Naive thymus-derived CD4-positive, alpha-beta T cell (primary cell): ENCODE measurements at regions of chr1 and their contacts with region 1.

Region 1: DNA sequence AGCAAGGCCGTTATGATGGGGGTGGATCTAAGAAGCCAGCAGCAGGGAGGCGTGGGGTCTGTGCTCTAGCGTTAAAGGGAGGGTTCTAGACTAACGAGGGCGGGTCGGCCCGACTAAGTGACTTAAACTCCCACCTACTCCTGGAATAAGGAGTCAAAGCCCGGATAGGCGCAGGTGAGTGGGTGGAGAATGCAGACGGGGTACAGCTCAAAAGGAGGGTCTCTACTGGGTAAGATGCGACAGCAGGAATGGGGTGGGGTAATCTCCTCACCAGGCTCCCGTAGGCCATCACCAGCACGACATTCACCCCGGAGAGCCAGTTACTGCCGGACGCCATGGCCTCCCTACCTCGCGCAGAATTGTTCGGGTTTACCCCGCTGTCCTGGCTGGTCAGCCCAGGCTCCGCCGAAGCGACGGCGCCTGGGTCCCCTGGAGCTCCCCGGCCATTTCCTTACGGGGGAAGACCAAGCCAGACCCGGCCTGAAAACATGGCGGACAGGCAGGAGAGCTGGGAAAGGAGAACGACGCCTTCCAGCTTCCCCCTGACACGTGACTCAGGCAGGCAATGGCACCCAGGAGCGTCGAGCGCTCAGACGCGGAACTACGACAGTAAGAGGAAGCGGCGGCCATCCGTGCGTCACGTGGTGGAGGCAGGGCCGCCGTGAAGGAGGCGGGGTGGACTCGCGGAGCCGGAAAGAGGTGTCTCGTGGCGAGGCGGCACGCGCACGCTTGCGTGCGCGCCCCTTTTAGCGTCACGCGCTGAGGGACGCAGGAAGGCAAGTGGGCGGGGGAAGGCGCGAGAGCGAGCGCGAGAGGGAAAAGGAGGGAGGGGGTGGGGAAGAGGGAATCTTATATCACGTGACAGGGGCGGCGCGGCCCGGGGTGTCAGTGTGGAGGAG is at the start of gene UBAP2L:
- DNase-seq: peak; percentile 92 to 99 (median 99)
- ATAC-seq: peak; percentile 91
- H3K4me3 ChIP-seq: peak within 1 kb of the TSS; percentile 95
- H3K4me3 Mint-ChIP-seq: peak within 1 kb of the TSS; percentile 83 to 100 (median 98)
- H3K27ac ChIP-seq: peak within 1 kb of the TSS; percentile 99
- H3K27ac Mint-ChIP-seq: peak within 1 kb of the TSS; percentile 96 to 100 (median 99)
- H3K4me1 ChIP-seq: peaks cover 42 to 45% of the 10 kb centered on the region in 2 donors
- H3K4me1 Mint-ChIP-seq: peaks cover 46 to 76% (median 64%) of the 10 kb centered on the region in 7 donors
- H3K27me3 ChIP-seq: no peaks in the 10 kb centered on the region
- H3K27me3 Mint-ChIP-seq: peaks cover 0 to 4% (median 0%) of the 10 kb centered on the region in 5 donors
- total RNA-seq, gene UBAP2L: 183 to 235 (median 189) TPM

Region 2: GRCh38 chr1:153727463-153728304 is 492.6 kb before region 1 on chr1 and contains the start of gene INTS3:
- CTCF ChIA-PET with region 1: no interaction called
- POLR2A ChIA-PET with region 1: no interaction called
- intact Hi-C with region 1: loop called in 1 of 2 experiments (anchors 1 kb)
- DNase-seq: peak; percentile 84 to 100 (median 99)
- ATAC-seq: peak; percentile 99
- H3K4me3 ChIP-seq: peak within 1 kb of the TSS; percentile 92
- H3K4me3 Mint-ChIP-seq: peak within 1 kb of the TSS; percentile 82 to 97 (median 92)
- H3K27ac ChIP-seq: peak within 1 kb of the TSS; percentile 94
- H3K27ac Mint-ChIP-seq: peak within 1 kb of the TSS; percentile 89 to 98 (median 95)
- H3K4me1 ChIP-seq: peaks cover 11 to 15% of the 10 kb centered on the region in 2 donors
- H3K4me1 Mint-ChIP-seq: peaks cover 7 to 35% (median 32%) of the 10 kb centered on the region in 7 donors
- H3K27me3 ChIP-seq: no peaks in the 10 kb centered on the region
- H3K27me3 Mint-ChIP-seq: peaks cover 0 to 2% (median 0%) of the 10 kb centered on the region in 5 donors
- total RNA-seq, gene INTS3: 43.6 to 68.1 (median 56.8) TPM

Region 3: DNA sequence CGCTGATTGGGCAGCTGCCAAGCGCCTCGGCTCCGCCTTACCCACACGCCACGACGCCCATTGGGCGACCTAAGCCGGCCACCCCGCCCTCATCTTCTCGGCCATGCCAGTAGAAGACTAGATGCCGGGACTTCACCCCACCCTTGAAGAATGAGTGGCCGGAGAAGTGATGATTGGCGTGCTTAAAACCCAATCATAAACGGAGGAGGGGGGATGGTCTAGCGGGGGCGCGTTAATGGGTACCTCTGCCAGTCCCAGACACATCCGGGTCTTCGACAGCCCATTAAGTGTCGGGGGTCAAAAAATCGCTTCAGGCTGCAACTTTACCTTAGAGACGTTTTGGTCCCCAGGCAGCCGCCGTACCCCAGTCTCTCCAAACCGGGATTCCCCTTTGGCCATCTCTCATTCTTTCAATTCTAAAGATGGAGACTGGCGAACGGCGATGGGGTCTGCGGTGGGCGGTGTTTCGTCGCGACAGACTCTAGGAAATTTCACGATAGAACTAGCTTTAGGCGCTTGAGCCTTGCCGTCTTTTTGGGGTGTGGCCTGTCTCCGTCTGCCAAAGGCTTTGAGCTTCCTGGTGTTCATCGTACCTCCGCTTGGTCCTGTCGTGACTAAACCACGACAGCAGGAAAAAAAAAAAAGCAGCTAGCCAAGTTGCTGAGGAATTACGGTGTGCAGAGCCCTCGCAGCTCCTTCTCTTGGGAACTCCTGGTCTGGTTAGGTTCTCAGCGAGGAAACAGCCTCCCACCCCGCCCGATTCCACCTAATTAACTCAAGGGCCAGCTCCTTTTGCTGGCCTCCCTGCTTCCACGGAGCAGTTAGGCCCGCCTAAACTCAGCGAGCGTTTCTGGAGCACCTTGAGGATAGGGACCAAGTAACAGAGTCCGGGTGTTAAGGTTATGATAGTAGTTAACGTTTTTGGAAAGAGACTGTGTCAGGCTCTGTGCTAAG is 297.1 kb before region 1 on chr1 and contains the start of gene GATAD2B:
- CTCF ChIA-PET with region 1: no interaction called
- POLR2A ChIA-PET with region 1: no interaction called
- intact Hi-C with region 1: loop called (anchors 1 kb)
- DNase-seq: peak; percentile 86 to 100 (median 99)
- ATAC-seq: peak; percentile 94
- H3K4me3 ChIP-seq: peak within 1 kb of the TSS; percentile 87
- H3K4me3 Mint-ChIP-seq: peak within 1 kb of the TSS; percentile 83 to 96 (median 94)
- H3K27ac ChIP-seq: peak within 1 kb of the TSS; percentile 97
- H3K27ac Mint-ChIP-seq: peak within 1 kb of the TSS; percentile 90 to 99 (median 97)
- H3K4me1 ChIP-seq: peaks cover 35% of the 10 kb centered on the region in 2 donors
- H3K4me1 Mint-ChIP-seq: peaks cover 31 to 53% (median 44%) of the 10 kb centered on the region in 7 donors
- H3K27me3 ChIP-seq: no peaks in the 10 kb centered on the region
- H3K27me3 Mint-ChIP-seq: peaks cover 0 to 3% (median 0%) of the 10 kb centered on the region in 5 donors
- total RNA-seq, gene GATAD2B: 67.3 to 102 (median 75.5) TPM

Region 4: DNA sequence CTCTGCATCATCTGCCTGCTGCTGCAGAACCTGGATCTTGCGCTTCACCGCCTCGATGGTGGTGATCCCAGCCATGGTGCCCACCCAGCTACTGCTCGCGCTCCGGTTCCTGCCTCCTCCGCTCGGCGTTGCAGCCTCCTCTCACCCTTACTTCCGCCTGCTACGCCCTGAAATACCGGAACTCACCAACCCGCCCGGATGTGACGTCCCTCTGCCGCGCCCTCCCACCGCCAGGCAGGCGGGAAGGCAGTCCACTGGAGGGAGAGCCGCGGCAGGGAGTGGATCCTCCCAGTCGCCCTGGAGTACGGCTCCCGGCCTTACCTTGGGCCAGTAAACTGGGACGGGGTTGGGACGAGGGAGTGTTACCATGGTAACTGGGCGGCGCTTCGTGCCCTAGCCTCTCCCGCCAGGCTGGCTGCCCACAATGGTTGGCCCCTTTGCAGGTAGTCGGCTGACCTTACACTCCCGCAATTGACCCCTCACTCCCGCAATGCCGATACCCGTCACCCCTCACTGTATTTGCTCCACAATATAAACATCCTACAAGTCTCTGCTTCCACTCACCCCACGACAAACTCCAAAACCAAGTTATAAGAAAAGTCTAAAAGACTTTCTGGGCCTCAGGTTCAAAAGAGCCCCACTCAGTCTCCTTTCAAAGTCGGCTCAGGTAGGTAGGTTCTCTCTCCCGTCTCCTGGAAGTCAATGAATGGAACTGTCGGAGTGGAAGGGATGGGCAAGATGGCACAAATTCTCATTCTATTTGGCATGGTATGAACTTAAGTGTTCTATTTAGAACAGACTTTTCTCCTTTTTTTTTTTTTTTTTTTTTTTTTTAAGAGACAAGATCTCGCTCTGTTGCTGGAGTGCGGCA is 37.0 kb before region 1 on chr1:
- CTCF ChIA-PET with region 1: interaction called, 3 read pairs
- POLR2A ChIA-PET with region 1: interaction called, 8 read pairs
- intact Hi-C with region 1: loop called (anchors 1 kb)
- DNase-seq: peak; percentile 84 to 94 (median 94)
- ATAC-seq: peak; percentile 89
- H3K4me3 ChIP-seq: peak overlapping the region; percentile 93
- H3K4me3 Mint-ChIP-seq: peak overlapping the region; percentile 98 to 100 (median 100)
- H3K27ac ChIP-seq: peak overlapping the region; percentile 95
- H3K27ac Mint-ChIP-seq: peak overlapping the region; percentile 98 to 100 (median 99)
- H3K4me1 ChIP-seq: peaks cover 25 to 44% of the 10 kb centered on the region in 2 donors
- H3K4me1 Mint-ChIP-seq: peaks cover 44 to 49% (median 48%) of the 10 kb centered on the region in 7 donors
- H3K27me3 ChIP-seq: no peaks in the 10 kb centered on the region
- H3K27me3 Mint-ChIP-seq: peaks cover 0 to 7% (median 0%) of the 10 kb centered on the region in 5 donors

Region 5: DNA sequence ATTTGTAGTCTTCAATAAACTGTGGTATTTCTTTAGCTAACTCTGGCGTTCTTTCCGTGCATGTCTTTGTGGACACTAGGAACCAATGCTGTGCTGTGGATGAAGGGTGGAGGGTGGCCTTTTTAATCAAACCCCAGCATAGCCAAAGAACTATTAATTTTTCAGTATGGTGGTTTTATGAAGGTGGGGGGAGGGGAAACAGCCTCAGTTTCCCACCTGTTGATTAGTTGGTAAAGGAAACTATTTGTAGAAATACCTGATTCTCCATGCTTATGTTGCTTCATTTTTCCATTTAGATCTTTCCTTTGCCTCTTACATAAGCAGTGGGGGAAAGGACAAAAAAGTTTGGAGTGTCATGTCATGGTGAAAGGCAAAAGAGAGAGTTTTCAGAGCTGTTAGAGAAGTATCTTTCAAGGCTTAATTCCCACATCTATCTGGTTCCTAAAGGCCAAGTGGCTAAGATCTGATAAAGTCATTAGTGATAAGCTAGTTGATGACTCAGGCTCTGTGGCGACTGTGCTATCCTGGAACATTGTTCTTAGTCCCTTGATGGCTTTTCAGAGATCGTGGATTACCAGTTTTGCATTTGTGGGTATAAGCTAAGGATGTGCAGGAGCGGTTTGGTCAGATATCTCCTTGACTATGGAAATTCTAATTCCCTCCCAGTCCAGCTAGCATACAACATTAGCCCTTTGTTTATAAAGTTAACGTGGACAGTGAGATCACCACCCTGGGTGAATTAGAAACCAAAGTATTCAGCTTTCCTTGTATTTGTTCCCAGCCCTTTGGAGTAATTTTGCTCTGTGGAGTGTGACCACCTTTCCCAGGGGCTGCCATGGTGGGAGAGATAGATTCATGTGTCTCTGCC is 43.4 kb after region 1 on chr1:
- CTCF ChIA-PET with region 1: interaction called, 3 read pairs
- POLR2A ChIA-PET with region 1: interaction called, 12 read pairs
- intact Hi-C with region 1: loop called (anchors 2 kb)
- DNase-seq: no peak
- ATAC-seq: no peak
- H3K4me3 ChIP-seq: no peak overlapping the region
- H3K4me3 Mint-ChIP-seq: peak overlapping the region in 2 of 10 donors; percentile 6 to 83
- H3K27ac ChIP-seq: peak overlapping the region; percentile 86
- H3K27ac Mint-ChIP-seq: peak overlapping the region; percentile 70 to 98 (median 89)
- H3K4me1 ChIP-seq: peaks cover 0 to 30% of the 10 kb centered on the region in 2 donors
- H3K4me1 Mint-ChIP-seq: peaks cover 22 to 52% (median 43%) of the 10 kb centered on the region in 7 donors
- H3K27me3 ChIP-seq: no peaks in the 10 kb centered on the region
- H3K27me3 Mint-ChIP-seq: no peaks in the 10 kb centered on the region

Region 6: GRCh38 chr1:154627257-154628120 is 407.2 kb after region 1 on chr1:
- CTCF ChIA-PET with region 1: no interaction called
- POLR2A ChIA-PET with region 1: no interaction called
- intact Hi-C with region 1: loop called in 1 of 2 experiments (anchors 5 kb)
- DNase-seq: peak; percentile 78 to 92 (median 90)
- ATAC-seq: peak; percentile 81
- H3K4me3 ChIP-seq: peak overlapping the region; percentile 72
- H3K4me3 Mint-ChIP-seq: peak overlapping the region; percentile 85 to 100 (median 94)
- H3K27ac ChIP-seq: peak overlapping the region; percentile 99
- H3K27ac Mint-ChIP-seq: peak overlapping the region; percentile 98 to 100 (median 99)
- H3K4me1 ChIP-seq: peaks cover 15% of the 10 kb centered on the region in 2 donors
- H3K4me1 Mint-ChIP-seq: peaks cover 20 to 54% (median 44%) of the 10 kb centered on the region in 7 donors
- H3K27me3 ChIP-seq: no peaks in the 10 kb centered on the region
- H3K27me3 Mint-ChIP-seq: peaks cover 0 to 20% (median 7%) of the 10 kb centered on the region in 5 donors

Region 7: DNA sequence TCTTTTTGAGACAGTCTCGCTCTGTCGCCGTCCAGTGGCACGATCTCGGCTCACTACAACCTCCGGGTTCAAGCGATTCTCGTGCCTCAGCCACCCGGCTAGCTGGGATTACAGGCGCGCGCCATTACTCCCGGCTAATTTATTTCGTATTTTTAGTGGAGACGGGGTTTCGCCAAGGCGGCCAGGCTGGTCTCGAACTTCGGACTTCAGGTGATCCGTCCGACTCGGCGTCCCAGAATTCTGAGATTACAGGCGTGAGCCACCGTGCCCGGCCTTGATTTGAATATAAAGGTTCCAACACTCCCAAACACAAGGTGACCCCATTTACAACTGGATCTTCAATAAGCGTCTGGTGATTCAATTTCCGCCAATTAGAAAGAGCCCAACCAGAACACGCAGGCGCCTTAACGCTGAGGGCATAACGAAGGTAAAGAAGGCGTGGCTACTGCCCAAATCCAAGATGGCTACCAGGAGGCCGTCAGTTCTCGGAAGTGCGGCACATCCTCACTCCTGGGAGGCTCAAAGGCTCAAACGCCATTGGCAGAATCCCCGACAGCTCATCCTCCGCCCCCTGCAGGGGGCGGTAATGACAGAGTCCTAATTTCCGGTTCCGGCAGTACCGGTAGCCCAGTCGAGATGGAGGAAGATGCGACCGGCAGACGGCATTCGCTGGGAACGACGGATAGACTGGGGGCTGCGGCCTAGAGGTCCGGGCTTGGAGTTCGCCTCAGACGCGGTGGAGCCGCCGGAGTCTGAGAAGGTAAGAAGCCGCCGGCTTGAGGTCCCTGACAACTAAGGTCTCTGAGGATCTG is 1973.4 kb after region 1 on chr1 and contains the start of gene SLC25A44:
- CTCF ChIA-PET with region 1: no interaction called
- POLR2A ChIA-PET with region 1: no interaction called
- intact Hi-C with region 1: loop called in 1 of 2 experiments (anchors 10 kb)
- DNase-seq: peak; percentile 94 to 98 (median 97)
- ATAC-seq: peak; percentile 99
- H3K4me3 ChIP-seq: peak within 1 kb of the TSS; percentile 92
- H3K4me3 Mint-ChIP-seq: peak within 1 kb of the TSS; percentile 83 to 99 (median 97)
- H3K27ac ChIP-seq: peak within 1 kb of the TSS; percentile 86
- H3K27ac Mint-ChIP-seq: peak within 1 kb of the TSS; percentile 85 to 97 (median 93)
- H3K4me1 ChIP-seq: peaks cover 12 to 31% of the 10 kb centered on the region in 2 donors
- H3K4me1 Mint-ChIP-seq: peaks cover 22 to 53% (median 45%) of the 10 kb centered on the region in 7 donors
- H3K27me3 ChIP-seq: no peaks in the 10 kb centered on the region
- H3K27me3 Mint-ChIP-seq: no peaks in the 10 kb centered on the region
- total RNA-seq, gene SLC25A44: 17.8 to 38.4 (median 19.6) TPM